ENCODE measurements at regions of chr10 and their contacts with region 1.

Region 1: DNA sequence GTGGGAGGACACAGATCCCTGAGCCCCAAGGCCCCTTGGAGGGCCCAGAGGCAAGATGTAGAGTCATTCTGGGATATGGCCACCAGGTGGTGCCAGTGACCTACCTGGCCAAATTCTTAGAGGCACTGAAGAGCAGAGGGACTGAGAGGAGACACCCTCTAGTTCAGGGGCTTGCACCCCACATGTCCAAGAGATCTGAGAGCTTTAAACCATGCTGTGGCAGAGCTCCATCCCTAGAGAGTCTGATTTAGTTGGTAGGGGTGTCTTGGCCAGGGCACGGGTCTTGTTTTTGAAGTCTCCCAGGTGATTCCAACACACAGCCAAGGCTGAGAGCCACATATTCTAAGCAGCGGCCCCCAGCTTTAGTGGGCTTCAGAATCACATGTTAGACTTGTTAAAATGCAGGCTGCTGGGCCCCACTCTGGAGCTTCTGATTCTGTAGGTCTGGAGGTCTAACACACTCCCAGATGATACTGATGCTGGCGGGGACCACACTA is 52.5 kb downstream of the PRF1 start:
- DNase-seq: peak; percentile 47 to 76
- H3K4me3 ChIP-seq: no peak overlapping the region
- H3K27ac ChIP-seq: no peak overlapping the region
- H3K4me1 ChIP-seq: no peaks in the 10 kb centered on the region
- H3K27me3 ChIP-seq: no peaks in the 10 kb centered on the region
- CTCF ChIP-seq: peak; percentile 98

Region 2: GRCh38 chr10:70584909-70585544 is 35.0 kb after region 1 on chr10:
- CTCF ChIA-PET with region 1: no interaction called
- POLR2A ChIA-PET with region 1: no interaction called
- intact Hi-C with region 1: no loop called
- DNase-seq: no peak
- H3K4me3 ChIP-seq: no peak overlapping the region
- H3K27ac ChIP-seq: no peak overlapping the region
- H3K4me1 ChIP-seq: no peaks in the 10 kb centered on the region
- H3K27me3 ChIP-seq: peaks cover 26% of the 10 kb centered on the region; the same call in 1 of the 2 replicates
- CTCF ChIP-seq: no peak

Region 3: DNA sequence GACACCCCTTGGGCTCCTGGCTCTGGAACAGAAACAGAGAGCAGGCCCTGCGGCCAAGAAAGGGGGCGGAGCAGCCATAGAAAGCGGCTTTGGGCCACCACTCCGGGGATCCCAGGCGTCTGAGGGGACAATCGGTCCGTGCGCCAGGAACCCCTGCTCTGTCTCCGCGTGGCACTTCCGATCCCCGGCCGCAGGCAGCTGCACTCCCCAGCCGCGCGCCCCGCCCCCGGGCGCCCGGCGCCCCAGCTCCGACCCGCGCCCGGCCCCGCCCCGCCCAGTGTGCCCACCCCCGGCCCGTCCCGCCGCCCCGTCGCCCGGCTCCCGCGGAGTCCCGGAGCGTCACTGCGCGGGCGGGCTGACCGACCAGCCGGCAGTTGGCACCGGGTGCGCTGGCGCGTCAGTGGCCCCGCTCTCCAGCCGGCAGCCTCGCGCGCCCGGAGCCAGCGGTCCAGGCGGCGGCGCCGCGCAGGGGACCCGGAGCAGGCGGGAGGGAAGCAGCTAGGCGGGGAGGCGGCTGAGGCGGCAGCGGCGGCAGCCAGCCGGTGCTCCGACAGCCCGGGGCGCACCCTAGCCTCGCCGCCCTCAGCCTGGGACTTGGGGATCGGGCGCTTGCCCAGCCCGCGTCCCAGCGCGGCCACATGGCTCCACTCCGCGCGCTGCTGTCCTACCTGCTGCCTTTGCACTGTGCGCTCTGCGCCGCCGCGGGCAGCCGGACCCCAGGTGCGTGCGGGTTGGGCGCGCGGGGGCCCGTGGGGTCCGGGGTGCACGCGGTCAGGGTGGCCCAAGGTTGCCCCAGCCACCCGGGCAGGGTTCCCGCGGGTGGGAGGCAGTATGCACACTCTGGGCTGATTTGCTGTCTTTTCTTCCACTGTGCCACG is 122.4 kb after region 1 on chr10 and contains the start of gene ADAMTS14:
- CTCF ChIA-PET with region 1: no interaction called
- POLR2A ChIA-PET with region 1: no interaction called
- intact Hi-C with region 1: loop called (anchors 5 kb)
- DNase-seq: peak; percentile 34 to 56
- H3K4me3 ChIP-seq: peak within 1 kb of the TSS; percentile 54
- H3K27ac ChIP-seq: no peak within 1 kb of the TSS
- H3K4me1 ChIP-seq: peaks cover 26% of the 10 kb centered on the region
- H3K27me3 ChIP-seq: peaks cover 11% of the 10 kb centered on the region; the same call in 1 of the 2 replicates
- CTCF ChIP-seq: no peak
- total RNA-seq, gene ADAMTS14: 1.9 and 2.7 TPM in 2 replicates

Region 4: DNA sequence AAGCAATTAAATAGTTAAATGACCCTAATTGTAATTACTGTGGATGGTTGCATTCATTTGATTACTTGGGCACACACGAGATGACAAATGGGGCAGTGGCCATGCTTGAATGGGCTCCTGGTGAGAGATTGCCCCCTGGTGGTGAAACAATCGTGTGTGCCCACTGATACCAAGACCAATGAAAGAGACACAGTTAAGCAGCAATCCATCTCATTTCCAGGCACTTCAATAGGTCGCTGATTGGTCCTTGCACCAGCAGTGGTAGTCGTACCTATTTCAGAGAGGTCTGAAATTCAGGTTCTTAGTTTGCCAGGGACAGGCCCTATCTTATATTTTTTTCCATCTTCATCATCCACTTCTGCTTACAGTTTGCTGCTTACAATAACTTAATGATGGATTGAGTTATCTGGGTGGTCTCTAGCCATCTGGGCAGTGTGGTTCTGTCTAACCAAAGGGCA is 330.1 kb after region 1 on chr10:
- CTCF ChIA-PET with region 1: no interaction called
- POLR2A ChIA-PET with region 1: no interaction called
- intact Hi-C with region 1: loop called (anchors 1 kb)
- DNase-seq: peak; percentile 59 to 76
- H3K4me3 ChIP-seq: no peak overlapping the region
- H3K27ac ChIP-seq: no peak overlapping the region
- H3K4me1 ChIP-seq: 0 out of 2 replicates have a peak, but pooled peaks cover 8% of the 10 kb centered on the region
- H3K27me3 ChIP-seq: no peaks in the 10 kb centered on the region
- CTCF ChIP-seq: peak; percentile 97

Region 5: GRCh38 chr10:70920565-70920964 is 370.6 kb after region 1 on chr10:
- CTCF ChIA-PET with region 1: interaction called, 3 read pairs
- POLR2A ChIA-PET with region 1: no interaction called
- intact Hi-C with region 1: loop called (anchors 1 kb)
- DNase-seq: peak; percentile 87 to 93
- H3K4me3 ChIP-seq: no peak overlapping the region
- H3K27ac ChIP-seq: no peak overlapping the region
- H3K4me1 ChIP-seq: peaks cover 27% of the 10 kb centered on the region
- H3K27me3 ChIP-seq: peaks cover 27% of the 10 kb centered on the region
- CTCF ChIP-seq: 0 out of 2 replicates have a peak, but pooled peaks have one; percentile 20

Region 6: GRCh38 chr10:71085689-71086438 is 535.9 kb after region 1 on chr10:
- CTCF ChIA-PET with region 1: no interaction called
- POLR2A ChIA-PET with region 1: no interaction called
- intact Hi-C with region 1: no loop called
- DNase-seq: no peak
- H3K4me3 ChIP-seq: no peak overlapping the region
- H3K27ac ChIP-seq: no peak overlapping the region
- H3K4me1 ChIP-seq: no peaks in the 10 kb centered on the region
- H3K27me3 ChIP-seq: peaks cover 20% of the 10 kb centered on the region
- CTCF ChIP-seq: no peak

Region 7: DNA sequence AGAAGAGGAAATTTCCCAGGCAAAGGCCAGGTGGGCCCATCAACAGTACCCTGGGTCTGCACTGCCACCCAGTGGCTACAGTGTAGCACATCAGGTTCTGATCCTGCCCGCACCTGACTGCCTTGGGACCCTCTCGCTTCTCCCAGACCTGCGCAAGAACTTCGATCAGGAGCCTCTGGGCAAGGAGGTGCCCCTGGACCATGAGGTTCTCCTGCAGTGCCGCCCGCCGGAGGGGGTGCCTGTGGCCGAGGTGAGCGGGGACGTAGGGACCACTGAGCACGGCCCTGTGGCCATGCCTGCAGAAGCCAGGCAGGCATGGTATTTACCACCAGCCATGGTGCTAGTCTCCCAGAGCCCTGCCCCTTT is 735.2 kb after region 1 on chr10:
- CTCF ChIA-PET with region 1: interaction called, 3 read pairs
- POLR2A ChIA-PET with region 1: no interaction called
- intact Hi-C with region 1: loop called (anchors 10 kb)
- DNase-seq: peak; percentile 41 to 55
- H3K4me3 ChIP-seq: no peak overlapping the region
- H3K27ac ChIP-seq: no peak overlapping the region
- H3K4me1 ChIP-seq: no peaks in the 10 kb centered on the region
- H3K27me3 ChIP-seq: no peaks in the 10 kb centered on the region
- CTCF ChIP-seq: peak; percentile 91

Measured in PC-9 (cell line).